PC-9 (cell line): ENCODE measurements at regions of chr17 and their contacts with region 1.

Region 1: GRCh38 chr17:33120103-33120502 is 128.5 kb downstream of the SPACA3 start:
- DNase-seq: no peak
- H3K4me3 ChIP-seq: no peak overlapping the region
- H3K27ac ChIP-seq: no peak overlapping the region
- H3K4me1 ChIP-seq: no peaks in the 10 kb centered on the region
- H3K27me3 ChIP-seq: peaks cover 16% of the 10 kb centered on the region; the same call in 1 of the 2 replicates
- CTCF ChIP-seq: no peak

Region 2: GRCh38 chr17:33131620-33132019 is 11.5 kb after region 1 on chr17:
- CTCF ChIA-PET with region 1: no interaction called
- POLR2A ChIA-PET with region 1: no interaction called
- intact Hi-C with region 1: no loop called
- DNase-seq: no peak
- H3K4me3 ChIP-seq: no peak overlapping the region
- H3K27ac ChIP-seq: no peak overlapping the region
- H3K4me1 ChIP-seq: no peaks in the 10 kb centered on the region
- H3K27me3 ChIP-seq: peaks cover 61% of the 10 kb centered on the region
- CTCF ChIP-seq: no peak

Region 3: DNA sequence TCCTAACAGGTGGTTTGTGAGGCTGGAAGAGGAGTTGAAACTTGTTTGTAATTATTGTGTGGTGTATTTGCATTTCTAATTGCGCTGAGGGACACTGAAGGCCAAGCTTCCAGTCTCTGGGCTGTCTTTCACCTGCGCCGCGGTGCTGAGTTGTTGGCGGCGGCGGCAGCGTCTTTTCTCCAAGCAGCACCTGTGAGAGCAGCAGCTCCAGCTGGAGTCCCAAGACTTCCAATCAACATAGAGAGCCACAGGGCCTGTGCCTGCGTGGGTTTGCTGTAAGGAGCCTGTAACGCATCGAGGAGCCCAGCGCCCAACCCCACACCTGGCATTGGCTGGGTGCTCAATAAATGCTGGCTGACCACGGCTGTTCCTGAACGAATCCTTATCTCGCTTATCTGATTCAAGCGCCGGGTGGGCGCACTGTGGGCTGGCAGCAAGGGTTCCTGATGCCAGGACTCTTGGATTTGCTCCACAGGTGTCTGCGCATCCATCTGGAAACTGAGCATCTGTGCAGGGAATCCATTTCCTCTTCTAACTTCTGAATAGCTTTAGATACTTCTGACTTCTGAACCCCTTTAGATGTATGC is 34.9 kb after region 1 on chr17:
- CTCF ChIA-PET with region 1: no interaction called
- POLR2A ChIA-PET with region 1: no interaction called
- intact Hi-C with region 1: no loop called
- DNase-seq: no peak
- H3K4me3 ChIP-seq: no peak overlapping the region
- H3K27ac ChIP-seq: no peak overlapping the region
- H3K4me1 ChIP-seq: no peaks in the 10 kb centered on the region
- H3K27me3 ChIP-seq: peaks cover 63% of the 10 kb centered on the region
- CTCF ChIP-seq: no peak

Region 4: GRCh38 chr17:33175562-33175961 is 55.5 kb after region 1 on chr17:
- CTCF ChIA-PET with region 1: no interaction called
- POLR2A ChIA-PET with region 1: no interaction called
- intact Hi-C with region 1: no loop called
- DNase-seq: no peak
- H3K4me3 ChIP-seq: no peak overlapping the region
- H3K27ac ChIP-seq: no peak overlapping the region
- H3K4me1 ChIP-seq: no peaks in the 10 kb centered on the region
- H3K27me3 ChIP-seq: peaks cover 41% of the 10 kb centered on the region
- CTCF ChIP-seq: no peak

Region 5: GRCh38 chr17:33241390-33241789 is 121.3 kb after region 1 on chr17:
- CTCF ChIA-PET with region 1: no interaction called
- POLR2A ChIA-PET with region 1: no interaction called
- intact Hi-C with region 1: loop called (anchors 10 kb)
- DNase-seq: peak in 1 of 2 experiments; percentile 37
- H3K4me3 ChIP-seq: no peak overlapping the region
- H3K27ac ChIP-seq: no peak overlapping the region
- H3K4me1 ChIP-seq: no peaks in the 10 kb centered on the region
- H3K27me3 ChIP-seq: peaks cover 29% of the 10 kb centered on the region
- CTCF ChIP-seq: no peak